Adrenal gland (tissue), 19 donors: ENCODE measurements at regions of chr21 and their contacts with region 1.

Region 1: DNA sequence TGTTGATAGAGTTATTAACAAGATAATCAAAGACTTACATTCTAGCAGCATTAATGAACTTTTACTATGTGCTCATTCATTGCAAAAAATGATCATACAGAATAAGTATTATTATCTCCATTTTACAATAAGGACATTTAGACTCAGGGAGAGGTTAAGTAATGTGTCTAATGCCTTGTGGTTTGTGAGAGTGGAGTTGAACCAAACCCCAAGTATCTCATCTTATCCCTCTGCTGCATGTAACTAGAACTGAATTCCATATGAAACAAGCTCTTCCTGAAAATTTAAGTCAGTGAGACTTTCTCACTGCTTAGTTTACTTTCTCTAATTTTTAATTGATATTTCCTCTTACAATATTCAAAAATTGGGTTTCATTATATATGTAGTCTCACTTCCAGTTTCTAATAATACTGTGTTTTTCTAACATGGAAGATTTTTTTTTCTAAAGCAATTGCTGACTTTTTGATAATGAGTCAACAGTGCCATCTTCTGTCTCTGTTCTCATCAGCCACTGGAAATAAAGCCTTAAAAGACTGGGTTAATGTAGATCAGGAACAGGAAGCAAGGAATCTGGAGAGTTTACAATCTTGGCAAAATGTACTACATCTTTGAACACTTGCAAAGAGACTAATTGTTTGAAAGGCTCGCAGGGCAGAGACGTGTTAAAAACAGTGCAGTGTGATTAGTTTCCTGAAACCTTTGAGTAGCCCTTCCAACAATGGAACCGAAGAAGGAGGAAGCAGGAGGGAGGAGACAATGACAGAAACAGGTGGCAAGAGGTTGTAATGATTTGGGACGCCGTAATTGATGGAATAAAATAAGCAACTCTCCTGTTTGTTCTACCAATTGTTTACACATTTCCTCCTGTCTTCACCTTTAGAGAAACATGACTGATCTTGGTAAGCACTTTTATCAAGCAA is 567.6 kb downstream of the MRPL39 start:
- DNase-seq: peak in 1 of 7 donors; percentile 2
- H3K4me3 ChIP-seq: no peak overlapping the region
- H3K27ac ChIP-seq: no peak overlapping the region
- H3K4me1 ChIP-seq: no peaks in the 10 kb centered on the region
- H3K27me3 ChIP-seq: no peaks in the 10 kb centered on the region
- CTCF ChIP-seq: peak; percentile 27 to 81 (median 62)
- POLR2A ChIP-seq: no peak

Region 2: DNA sequence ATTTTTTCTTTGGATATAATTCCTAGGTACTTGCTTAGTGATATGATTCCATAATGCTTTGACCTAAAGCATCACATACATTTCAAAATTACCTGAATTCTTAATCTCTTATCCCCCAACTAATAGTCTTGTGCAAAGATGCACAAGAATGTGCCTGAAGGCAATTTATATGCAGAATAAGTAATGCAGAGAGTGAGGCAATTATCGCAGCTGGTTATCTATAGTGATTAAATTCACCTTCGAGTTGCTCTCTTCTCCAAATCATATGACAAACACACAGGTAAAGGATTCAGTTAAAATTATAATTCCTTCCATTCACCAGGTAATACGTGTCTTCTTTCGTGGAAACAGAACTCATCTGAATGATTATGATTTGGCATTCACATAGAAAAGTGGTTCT is 149.7 kb before region 1 on chr21:
- intact Hi-C with region 1: loop called (anchors 5 kb)
- DNase-seq: no peak
- H3K4me3 ChIP-seq: no peak overlapping the region
- H3K27ac ChIP-seq: no peak overlapping the region
- H3K4me1 ChIP-seq: no peaks in the 10 kb centered on the region
- H3K27me3 ChIP-seq: no peaks in the 10 kb centered on the region
- CTCF ChIP-seq: no peak
- POLR2A ChIP-seq: no peak

Region 3: GRCh38 chr21:24895885-24896734 is 143.6 kb before region 1 on chr21:
- intact Hi-C with region 1: loop called (anchors 5 kb)
- DNase-seq: peak; percentile 15 to 61 (median 34)
- H3K4me3 ChIP-seq: no peak overlapping the region
- H3K27ac ChIP-seq: no peak overlapping the region
- H3K4me1 ChIP-seq: no peaks in the 10 kb centered on the region
- H3K27me3 ChIP-seq: no peaks in the 10 kb centered on the region
- CTCF ChIP-seq: peak; percentile 27 to 80 (median 72)
- POLR2A ChIP-seq: no peak

Region 4: GRCh38 chr21:24976238-24976637 is 63.5 kb before region 1 on chr21:
- intact Hi-C with region 1: loop called in 1 of 2 experiments (anchors 10 kb)
- DNase-seq: no peak
- H3K4me3 ChIP-seq: no peak overlapping the region
- H3K27ac ChIP-seq: no peak overlapping the region
- H3K4me1 ChIP-seq: no peaks in the 10 kb centered on the region
- H3K27me3 ChIP-seq: no peaks in the 10 kb centered on the region
- CTCF ChIP-seq: no peak
- POLR2A ChIP-seq: no peak